ENCODE measurements at regions of chr14 and their contacts with region 1.

Region 1: DNA sequence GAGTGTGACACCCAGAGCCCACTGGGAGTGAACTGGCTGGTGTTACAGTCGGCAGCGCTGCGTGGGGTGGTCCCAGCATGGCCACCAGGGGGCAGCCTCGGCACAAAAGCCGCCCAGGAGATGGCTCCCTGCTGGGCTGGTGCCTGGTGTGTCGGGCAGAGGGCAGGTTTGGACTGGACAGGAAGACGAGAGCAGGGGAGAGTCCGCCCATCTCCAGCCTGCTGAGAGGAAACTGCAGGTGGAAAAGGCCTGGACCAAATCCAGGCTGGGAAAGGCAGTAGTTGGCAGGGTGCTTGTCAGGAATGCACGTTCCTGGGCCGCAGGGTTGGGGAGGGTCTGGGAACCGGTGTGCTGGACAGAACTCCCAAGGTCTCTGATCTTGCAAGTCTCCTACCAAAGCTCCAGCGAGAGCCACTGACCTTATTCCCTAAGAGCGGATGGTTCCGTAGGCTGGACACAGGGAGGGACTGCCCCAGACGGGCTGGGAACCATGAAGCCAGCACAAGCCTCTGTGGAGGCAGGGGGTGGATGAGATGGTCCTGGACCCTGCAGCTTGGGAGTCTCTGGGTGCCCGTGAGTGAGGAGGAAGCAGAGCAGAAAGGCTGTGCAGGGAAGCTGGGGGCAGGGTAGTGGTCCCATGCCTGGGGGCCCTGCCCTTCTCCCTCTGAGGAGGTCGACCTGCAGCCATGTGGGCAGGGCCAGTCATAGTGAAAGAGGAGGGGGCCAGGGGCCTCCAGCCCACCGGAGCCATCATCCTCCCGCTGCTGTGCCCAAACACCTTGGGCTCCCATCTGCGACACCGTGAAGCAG is 1.8 kb downstream of the AHNAK2 start:
- DNase-seq: peak; percentile 76 to 94 (median 88)
- ATAC-seq: peak; percentile 88
- H3K4me3 ChIP-seq: no peak overlapping the region
- H3K4me3 Mint-ChIP-seq: peak overlapping the region; percentile 67
- H3K27ac ChIP-seq: no peak overlapping the region
- H3K27ac Mint-ChIP-seq: no peak overlapping the region
- H3K4me1 ChIP-seq: peaks cover 8% of the 10 kb centered on the region
- H3K4me1 Mint-ChIP-seq: peaks cover 12% of the 10 kb centered on the region
- H3K27me3 ChIP-seq: peaks cover 9 to 16% of the 10 kb centered on the region in 2 experiments
- H3K27me3 Mint-ChIP-seq: peaks cover 22% of the 10 kb centered on the region
- CTCF ChIP-seq: peak; percentile 84

Region 2: GRCh38 chr14:104735830-104736642 is 240.4 kb before region 1 on chr14:
- CTCF ChIA-PET with region 1: no interaction called
- POLR2A ChIA-PET with region 1: no interaction called
- intact Hi-C with region 1: no loop called
- DNase-seq: no peak
- ATAC-seq: no peak
- H3K4me3 ChIP-seq: no peak overlapping the region
- H3K4me3 Mint-ChIP-seq: no peak overlapping the region
- H3K27ac ChIP-seq: no peak overlapping the region
- H3K27ac Mint-ChIP-seq: no peak overlapping the region
- H3K4me1 ChIP-seq: no peaks in the 10 kb centered on the region
- H3K4me1 Mint-ChIP-seq: no peaks in the 10 kb centered on the region
- H3K27me3 ChIP-seq: no peaks in the 10 kb centered on the region
- H3K27me3 Mint-ChIP-seq: no peaks in the 10 kb centered on the region
- CTCF ChIP-seq: no peak

Region 3: GRCh38 chr14:104993808-104994591 is 17.6 kb after region 1 on chr14:
- CTCF ChIA-PET with region 1: interaction called, 10 read pairs
- POLR2A ChIA-PET with region 1: no interaction called
- intact Hi-C with region 1: no loop called
- DNase-seq: no peak
- ATAC-seq: no peak
- H3K4me3 ChIP-seq: no peak overlapping the region
- H3K4me3 Mint-ChIP-seq: no peak overlapping the region
- H3K27ac ChIP-seq: no peak overlapping the region
- H3K27ac Mint-ChIP-seq: no peak overlapping the region
- H3K4me1 ChIP-seq: no peaks in the 10 kb centered on the region
- H3K4me1 Mint-ChIP-seq: no peaks in the 10 kb centered on the region
- H3K27me3 ChIP-seq: no peaks in the 10 kb centered on the region
- H3K27me3 Mint-ChIP-seq: no peaks in the 10 kb centered on the region
- CTCF ChIP-seq: no peak

Region 4: DNA sequence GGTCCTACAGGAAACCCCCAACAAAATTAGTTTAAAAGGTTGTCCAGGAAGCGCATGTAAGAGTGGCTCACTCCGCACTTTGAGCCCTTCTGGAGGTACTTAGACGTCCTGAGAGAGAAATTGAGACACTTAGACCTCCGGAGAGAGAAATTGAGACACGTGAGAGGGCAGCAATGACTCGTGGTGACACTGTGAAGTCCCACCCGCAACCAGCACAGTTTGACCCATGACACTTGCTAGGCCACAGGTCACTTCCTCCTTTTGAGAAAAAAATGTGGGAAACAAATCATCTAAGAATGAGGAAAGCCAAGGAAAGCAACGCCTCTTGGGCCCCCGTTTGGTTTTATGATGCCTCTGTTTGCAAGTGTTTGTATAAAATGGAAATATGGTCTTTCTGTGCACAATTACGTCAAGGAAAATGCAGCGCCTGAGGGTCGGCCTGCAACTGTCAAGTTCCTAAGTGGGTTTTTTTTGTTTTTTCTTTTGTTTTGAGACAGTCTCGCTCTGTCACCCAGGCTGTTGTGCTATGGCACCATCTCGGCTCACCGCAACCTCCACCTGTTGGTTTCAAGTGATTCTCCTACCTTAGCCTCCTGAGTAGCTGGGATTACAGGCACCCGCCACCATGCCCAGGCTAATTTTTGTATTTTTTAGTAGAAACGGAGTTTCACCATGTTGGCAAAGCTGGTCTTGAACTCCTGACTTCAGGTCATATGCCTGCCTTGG is 58.1 kb after region 1 on chr14:
- CTCF ChIA-PET with region 1: interaction called, 11 read pairs
- POLR2A ChIA-PET with region 1: no interaction called
- intact Hi-C with region 1: no loop called
- DNase-seq: no peak
- ATAC-seq: no peak
- H3K4me3 ChIP-seq: no peak overlapping the region
- H3K4me3 Mint-ChIP-seq: peak overlapping the region; percentile 31
- H3K27ac ChIP-seq: no peak overlapping the region
- H3K27ac Mint-ChIP-seq: no peak overlapping the region
- H3K4me1 ChIP-seq: peaks cover 8% of the 10 kb centered on the region
- H3K4me1 Mint-ChIP-seq: peaks cover 13% of the 10 kb centered on the region
- H3K27me3 ChIP-seq: no peaks in the 10 kb centered on the region
- H3K27me3 Mint-ChIP-seq: no peaks in the 10 kb centered on the region
- CTCF ChIP-seq: no peak

Region 5: DNA sequence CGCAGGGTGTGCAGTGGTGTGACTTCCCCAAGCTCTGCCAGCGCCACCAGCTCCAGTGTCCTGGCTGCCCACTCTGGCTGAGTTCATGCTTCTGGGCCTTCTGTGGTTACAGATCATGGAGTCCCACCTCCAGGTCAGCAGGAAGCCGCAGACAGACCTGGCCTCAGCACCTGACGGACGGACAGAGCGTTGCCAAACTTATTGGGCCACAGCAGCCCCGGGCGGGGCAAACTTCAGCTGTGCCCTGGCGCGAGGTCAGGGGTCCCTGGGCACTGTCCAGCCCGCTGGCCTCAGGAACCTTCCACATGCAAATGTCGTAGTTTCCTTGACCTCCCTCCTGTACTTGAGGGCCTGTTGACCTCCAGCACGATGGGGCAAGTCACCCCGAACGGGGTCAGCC is 77.6 kb after region 1 on chr14:
- CTCF ChIA-PET with region 1: interaction called, 15 read pairs
- POLR2A ChIA-PET with region 1: no interaction called
- intact Hi-C with region 1: no loop called
- DNase-seq: no peak
- ATAC-seq: no peak
- H3K4me3 ChIP-seq: no peak overlapping the region
- H3K4me3 Mint-ChIP-seq: no peak overlapping the region
- H3K27ac ChIP-seq: no peak overlapping the region
- H3K27ac Mint-ChIP-seq: no peak overlapping the region
- H3K4me1 ChIP-seq: peaks cover 8% of the 10 kb centered on the region
- H3K4me1 Mint-ChIP-seq: peaks cover 15% of the 10 kb centered on the region
- H3K27me3 ChIP-seq: no peaks in the 10 kb centered on the region
- H3K27me3 Mint-ChIP-seq: no peaks in the 10 kb centered on the region
- CTCF ChIP-seq: no peak

Region 6: GRCh38 chr14:105351920-105352851 is 375.8 kb after region 1 on chr14:
- CTCF ChIA-PET with region 1: no interaction called
- POLR2A ChIA-PET with region 1: no interaction called
- intact Hi-C with region 1: loop called (anchors 2 to 10 kb)
- DNase-seq: peak; percentile 80 to 93 (median 87)
- ATAC-seq: peak; percentile 99
- H3K4me3 ChIP-seq: no peak overlapping the region
- H3K4me3 Mint-ChIP-seq: no peak overlapping the region
- H3K27ac ChIP-seq: no peak overlapping the region
- H3K27ac Mint-ChIP-seq: no peak overlapping the region
- H3K4me1 ChIP-seq: peaks cover 4% of the 10 kb centered on the region
- H3K4me1 Mint-ChIP-seq: peaks cover 3% of the 10 kb centered on the region
- H3K27me3 ChIP-seq: no peaks in the 10 kb centered on the region
- H3K27me3 Mint-ChIP-seq: no peaks in the 10 kb centered on the region
- CTCF ChIP-seq: peak; percentile 76

Region 7: DNA sequence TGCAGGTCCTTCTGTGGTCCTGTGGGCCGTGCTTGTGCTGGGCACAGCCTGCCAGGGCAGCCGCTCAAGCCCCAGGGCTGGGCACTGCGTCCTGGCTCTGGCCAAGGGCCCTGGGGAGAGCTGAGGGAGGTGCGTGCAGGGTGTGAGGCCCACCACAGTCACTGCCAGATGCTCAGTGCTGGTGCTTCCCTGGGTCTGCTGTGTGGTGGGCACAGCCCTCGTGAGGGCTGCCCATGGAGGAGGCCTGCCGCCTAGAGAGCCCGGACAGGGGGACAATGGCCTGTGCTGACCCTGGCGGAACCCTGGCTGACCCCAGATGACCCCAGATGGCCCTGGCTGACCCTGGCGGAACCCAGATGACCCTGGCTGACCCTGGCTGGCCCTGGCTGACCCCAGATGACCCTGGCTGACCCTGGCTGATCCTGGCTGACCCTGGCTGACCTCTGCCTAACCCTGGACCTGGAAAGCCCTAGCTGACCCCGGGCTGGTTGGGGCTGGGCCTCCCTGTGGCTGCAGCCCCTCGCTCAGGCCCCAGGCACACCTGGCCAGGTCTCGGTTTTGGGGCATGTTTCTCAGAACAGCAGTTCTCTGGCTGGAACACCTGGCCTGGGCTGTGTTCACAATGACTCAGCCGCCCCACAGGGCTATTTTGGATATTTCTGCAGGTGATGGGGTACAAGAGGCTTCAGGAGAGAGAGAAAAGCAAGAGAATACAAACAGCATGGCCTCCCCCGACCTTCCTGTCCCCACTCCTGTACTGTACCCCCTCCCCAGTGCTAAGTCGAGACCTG is 605.3 kb after region 1 on chr14:
- CTCF ChIA-PET with region 1: no interaction called
- POLR2A ChIA-PET with region 1: no interaction called
- intact Hi-C with region 1: no loop called
- DNase-seq: no peak
- ATAC-seq: no peak
- H3K4me3 ChIP-seq: no peak overlapping the region
- H3K4me3 Mint-ChIP-seq: no peak overlapping the region
- H3K27ac ChIP-seq: no peak overlapping the region
- H3K27ac Mint-ChIP-seq: no peak overlapping the region
- H3K4me1 ChIP-seq: no peaks in the 10 kb centered on the region
- H3K4me1 Mint-ChIP-seq: no peaks in the 10 kb centered on the region
- H3K27me3 ChIP-seq: no peaks in the 10 kb centered on the region
- H3K27me3 Mint-ChIP-seq: no peaks in the 10 kb centered on the region
- CTCF ChIP-seq: no peak

Measured in CD8-positive, alpha-beta T cell (primary cell).